HEK293 (cell line): ENCODE measurements at regions of chr7 and their contacts with region 1.

Region 1: GRCh38 chr7:106947244-106947728 is 82.2 kb downstream of the PIK3CG start:
- H3K4me3 ChIP-seq: no peak overlapping the region
- H3K27ac ChIP-seq: no peak overlapping the region
- H3K4me1 ChIP-seq: no peaks in the 10 kb centered on the region
- CTCF ChIP-seq: peak; percentile 40; the same call in 1 of the 2 replicates

Region 2: DNA sequence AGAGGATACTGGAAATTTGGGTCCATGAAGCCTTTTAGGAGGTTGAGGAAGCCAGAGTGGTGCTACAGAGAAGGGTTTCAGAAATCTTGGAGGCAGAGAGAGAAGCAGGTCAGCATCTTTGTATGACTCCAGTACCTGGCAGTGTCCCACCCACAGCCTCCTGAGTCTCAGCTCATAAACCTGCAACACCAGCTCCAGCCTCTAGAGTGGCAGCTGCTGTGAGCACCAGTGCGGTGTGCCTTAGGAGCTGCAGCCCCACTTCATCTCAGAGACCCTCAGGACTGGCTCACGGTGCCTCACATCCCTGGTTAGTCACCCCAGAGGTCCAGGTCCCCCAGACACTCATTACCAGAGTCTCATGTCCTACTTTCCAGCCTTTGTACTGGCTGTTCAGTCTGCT is 12.5 kb after region 1 on chr7:
- CTCF ChIA-PET with region 1: interaction called, 15 read pairs
- POLR2A ChIA-PET with region 1: no interaction called
- H3K4me3 ChIP-seq: no peak overlapping the region
- H3K27ac ChIP-seq: no peak overlapping the region
- H3K4me1 ChIP-seq: no peaks in the 10 kb centered on the region
- CTCF ChIP-seq: no peak